ENCODE measurements at regions of chr21 and their contacts with region 1.

Region 1: GRCh38 chr21:26845066-26845758 is at the start of gene ADAMTS1:
- DNase-seq: peak; percentile 74
- H3K4me3 Mint-ChIP-seq: peak within 1 kb of the TSS; percentile 78
- H3K27ac Mint-ChIP-seq: peak within 1 kb of the TSS; percentile 84
- H3K4me1 Mint-ChIP-seq: peaks cover 32% of the 10 kb centered on the region
- H3K27me3 Mint-ChIP-seq: peaks cover 57% of the 10 kb centered on the region
- total RNA-seq, gene ADAMTS1: 0.95 and 1.7 TPM in 2 replicates

Region 2: GRCh38 chr21:26743524-26743923 is 101.7 kb before region 1 on chr21:
- intact Hi-C with region 1: no loop called
- DNase-seq: no peak
- H3K4me3 Mint-ChIP-seq: no peak overlapping the region
- H3K27ac Mint-ChIP-seq: no peak overlapping the region
- H3K4me1 Mint-ChIP-seq: no peaks in the 10 kb centered on the region
- H3K27me3 Mint-ChIP-seq: no peaks in the 10 kb centered on the region

Region 3: GRCh38 chr21:26769613-26770188 is 75.5 kb before region 1 on chr21:
- intact Hi-C with region 1: loop called (anchors 5 kb)
- DNase-seq: no peak
- H3K4me3 Mint-ChIP-seq: no peak overlapping the region
- H3K27ac Mint-ChIP-seq: no peak overlapping the region
- H3K4me1 Mint-ChIP-seq: no peaks in the 10 kb centered on the region
- H3K27me3 Mint-ChIP-seq: no peaks in the 10 kb centered on the region

Region 4: DNA sequence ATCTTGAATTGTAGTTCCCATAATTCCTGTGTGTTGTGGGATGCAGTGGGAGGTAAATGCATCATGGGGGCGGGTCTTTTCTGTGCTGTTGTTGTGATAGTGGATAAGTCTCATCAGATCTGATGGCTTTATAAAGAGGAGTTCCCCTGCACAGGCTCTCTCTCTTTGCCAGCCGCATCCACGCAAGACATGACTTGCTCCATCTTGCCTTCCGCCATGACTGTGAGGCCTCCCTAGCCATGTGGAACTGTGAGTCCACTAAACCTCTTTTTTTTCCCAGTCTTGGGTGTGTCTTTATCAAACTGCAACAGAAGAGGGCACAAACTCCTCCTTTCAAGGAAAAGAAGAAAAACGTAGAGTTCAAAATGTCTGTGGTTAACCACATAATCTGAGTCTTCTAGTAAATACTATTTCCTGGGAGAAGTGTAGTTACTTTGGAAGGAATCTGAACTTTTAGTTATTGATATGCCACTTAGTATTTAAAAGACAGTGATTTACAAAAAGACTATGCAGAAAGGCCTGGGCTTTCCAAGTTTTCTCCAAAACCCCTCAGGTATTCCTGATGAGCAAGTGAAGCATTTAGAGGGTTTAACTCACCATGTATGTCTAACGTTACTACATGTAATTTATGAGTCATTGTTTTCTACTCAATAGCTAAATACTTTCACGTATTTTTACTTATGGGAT is 10.0 kb before region 1 on chr21:
- intact Hi-C with region 1: loop called (anchors 1 kb)
- DNase-seq: no peak
- H3K4me3 Mint-ChIP-seq: peak overlapping the region; percentile 19
- H3K27ac Mint-ChIP-seq: peak overlapping the region; percentile 43
- H3K4me1 Mint-ChIP-seq: peaks cover 30% of the 10 kb centered on the region
- H3K27me3 Mint-ChIP-seq: peaks cover 5% of the 10 kb centered on the region

Region 5: GRCh38 chr21:26920055-26920454 is 74.8 kb after region 1 on chr21:
- intact Hi-C with region 1: no loop called
- DNase-seq: no peak
- H3K4me3 Mint-ChIP-seq: no peak overlapping the region
- H3K27ac Mint-ChIP-seq: no peak overlapping the region
- H3K4me1 Mint-ChIP-seq: no peaks in the 10 kb centered on the region
- H3K27me3 Mint-ChIP-seq: no peaks in the 10 kb centered on the region

Region 6: DNA sequence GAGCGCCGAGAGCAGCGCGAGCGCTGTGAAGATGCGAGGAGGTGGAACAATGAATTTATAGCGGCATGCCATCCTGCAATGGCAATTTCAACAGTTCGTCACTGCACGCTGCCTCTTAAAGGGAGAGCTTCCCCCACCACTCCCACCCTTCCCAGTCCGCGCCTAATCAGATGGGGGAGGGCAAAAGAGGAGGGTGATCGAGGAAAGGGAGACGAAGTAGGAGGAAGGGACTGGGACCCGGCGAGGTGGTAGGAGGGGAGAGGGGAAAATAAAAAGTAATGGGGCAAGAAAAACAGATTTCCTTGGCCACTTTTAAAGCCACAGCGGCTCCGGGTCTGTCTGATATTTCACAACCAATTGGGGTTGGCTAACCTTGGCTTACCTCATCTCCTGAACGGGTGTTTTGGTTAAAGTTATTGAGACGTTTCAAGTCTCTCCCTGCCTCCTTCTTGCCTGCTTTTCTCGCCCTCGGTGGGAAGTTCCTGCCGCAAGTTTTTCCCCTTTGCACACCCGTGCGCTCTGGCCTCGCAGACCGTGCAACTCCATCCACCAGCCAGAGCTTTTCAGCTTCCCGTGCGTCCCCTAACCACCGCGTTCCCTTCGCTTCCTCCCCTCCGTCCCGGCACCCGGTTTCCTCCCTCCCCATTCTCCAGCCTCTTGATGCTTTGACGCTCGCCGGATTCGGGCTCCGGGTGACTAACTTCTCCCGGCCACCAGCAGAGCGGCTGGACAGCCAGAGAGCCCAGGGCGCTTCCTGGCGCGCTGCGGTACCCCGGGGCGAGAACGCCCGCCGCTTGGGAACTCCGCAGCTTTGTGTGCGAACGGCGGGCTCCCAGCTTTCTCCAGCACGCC is 122.1 kb after region 1 on chr21 and contains the start of gene ADAMTS5:
- intact Hi-C with region 1: loop called (anchors 5 kb)
- DNase-seq: no peak
- H3K4me3 Mint-ChIP-seq: no peak within 1 kb of the TSS
- H3K27ac Mint-ChIP-seq: no peak within 1 kb of the TSS
- H3K4me1 Mint-ChIP-seq: no peaks in the 10 kb centered on the region
- H3K27me3 Mint-ChIP-seq: peaks cover 40% of the 10 kb centered on the region
- total RNA-seq, gene ADAMTS5: not detected in 2 replicates

Region 7: DNA sequence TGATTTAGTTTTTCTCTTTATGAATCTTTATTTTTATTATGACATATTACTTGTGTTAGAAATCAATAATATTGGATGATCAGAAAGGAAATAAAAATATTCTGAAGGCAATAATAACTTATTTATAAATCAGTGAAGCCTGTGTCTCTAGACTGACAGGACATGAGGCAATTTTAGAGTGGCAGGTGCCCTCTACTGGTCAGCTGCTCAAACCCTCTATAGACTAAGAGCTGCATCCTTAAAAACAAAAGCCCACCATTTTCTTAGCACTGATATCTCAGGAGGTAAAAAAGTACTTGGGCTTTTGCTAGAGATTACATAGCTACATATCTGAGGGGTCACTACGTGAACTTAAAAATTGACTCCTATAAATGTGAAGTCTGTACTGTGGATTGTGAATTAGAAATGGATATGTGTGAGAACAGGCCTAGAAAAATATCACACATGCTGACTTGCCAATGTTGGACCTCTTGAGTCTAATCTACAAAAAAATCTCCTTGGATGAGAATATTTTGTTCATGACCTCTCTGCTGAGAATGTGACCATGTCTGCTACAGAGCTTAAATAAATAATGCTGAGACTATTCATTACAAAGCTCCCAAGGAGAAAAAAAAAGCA is 719.6 kb after region 1 on chr21:
- intact Hi-C with region 1: loop called (anchors 5 kb)
- DNase-seq: no peak
- H3K4me3 Mint-ChIP-seq: no peak overlapping the region
- H3K27ac Mint-ChIP-seq: no peak overlapping the region
- H3K4me1 Mint-ChIP-seq: no peaks in the 10 kb centered on the region
- H3K27me3 Mint-ChIP-seq: no peaks in the 10 kb centered on the region

Region 8: DNA sequence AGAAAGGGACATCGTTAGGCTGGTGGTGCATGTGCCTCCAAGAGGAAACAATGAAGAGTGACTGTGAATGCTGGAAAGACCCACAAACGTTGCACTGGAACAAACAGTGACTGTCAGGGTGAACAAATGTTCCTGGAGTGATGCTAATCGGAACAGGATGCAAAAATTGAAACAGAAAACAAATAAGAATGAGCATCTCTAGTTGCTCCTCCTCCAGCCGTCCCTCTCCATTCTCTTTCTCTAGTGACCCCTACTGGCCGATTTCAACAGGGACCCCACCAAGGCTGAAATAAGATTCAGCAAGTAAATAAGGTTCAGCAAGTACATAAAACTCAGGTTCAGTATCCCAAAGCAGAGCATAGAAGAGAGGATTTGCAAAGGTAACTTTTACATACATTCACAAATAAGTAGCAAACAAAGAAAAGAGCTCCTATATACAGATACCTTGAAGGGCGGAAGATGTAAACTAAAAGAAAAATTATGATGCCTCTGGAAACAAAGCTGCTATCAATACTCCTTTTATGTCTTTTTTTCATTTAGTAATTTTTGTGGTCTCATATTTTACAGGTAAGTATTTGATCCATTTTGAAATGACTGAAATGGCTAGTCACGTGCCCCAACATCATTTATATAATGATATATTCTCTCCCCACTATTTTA is 957.7 kb after region 1 on chr21:
- intact Hi-C with region 1: loop called (anchors 5 kb)
- DNase-seq: peak; percentile 73
- H3K4me3 Mint-ChIP-seq: no peak overlapping the region
- H3K27ac Mint-ChIP-seq: no peak overlapping the region
- H3K4me1 Mint-ChIP-seq: no peaks in the 10 kb centered on the region
- H3K27me3 Mint-ChIP-seq: no peaks in the 10 kb centered on the region